Left ventricle myocardium superior (tissue), 1 donor: ENCODE measurements at regions of chr9 and their contacts with region 1.

Region 1: DNA sequence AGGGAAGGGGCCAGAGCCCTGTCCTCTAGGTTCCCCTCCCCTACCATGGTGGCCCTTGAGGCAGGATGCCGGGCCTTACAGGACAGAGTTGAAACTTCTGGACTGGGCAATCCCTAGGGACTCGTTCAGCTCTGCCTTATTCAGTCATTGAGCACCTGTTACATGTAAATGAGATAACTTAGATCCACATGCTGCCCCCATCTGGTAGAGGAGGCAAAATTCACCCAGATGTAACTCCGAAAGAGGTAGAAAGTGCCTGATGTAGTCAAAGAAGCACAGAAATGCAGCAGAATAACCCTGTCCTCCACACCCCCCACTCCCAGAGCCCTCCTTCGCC is 1.5 kb downstream of the GGTA1 start:
- DNase-seq: peak; percentile 37
- ATAC-seq: peak; percentile 65

Region 2: GRCh38 chr9:120868676-120869359 is 629.3 kb before region 1 on chr9:
- intact Hi-C with region 1: no loop called
- DNase-seq: peak; percentile 97
- ATAC-seq: peak; percentile 96

Region 3: GRCh38 chr9:121305269-121305994 is 192.7 kb before region 1 on chr9:
- intact Hi-C with region 1: no loop called
- DNase-seq: peak; percentile 89
- ATAC-seq: peak; percentile 70

Region 4: GRCh38 chr9:121839726-121840500 is 341.8 kb after region 1 on chr9:
- intact Hi-C with region 1: loop called (anchors 10 kb)
- DNase-seq: no peak
- ATAC-seq: no peak